Right ventricle myocardium inferior (tissue), 1 donor: ENCODE measurements at regions of chr4 and their contacts with region 1.

Region 1: GRCh38 chr4:113248320-113248719 is 198.9 kb downstream of the ANK2 start:
- DNase-seq: no peak
- ATAC-seq: no peak

Region 2: GRCh38 chr4:113645771-113646441 is 397.6 kb after region 1 on chr4:
- intact Hi-C with region 1: loop called (anchors 5 kb)
- DNase-seq: no peak
- ATAC-seq: peak; percentile 32